Mammary epithelial cell (primary cell): ENCODE measurements at regions of chr14 and their contacts with region 1.

Region 1: DNA sequence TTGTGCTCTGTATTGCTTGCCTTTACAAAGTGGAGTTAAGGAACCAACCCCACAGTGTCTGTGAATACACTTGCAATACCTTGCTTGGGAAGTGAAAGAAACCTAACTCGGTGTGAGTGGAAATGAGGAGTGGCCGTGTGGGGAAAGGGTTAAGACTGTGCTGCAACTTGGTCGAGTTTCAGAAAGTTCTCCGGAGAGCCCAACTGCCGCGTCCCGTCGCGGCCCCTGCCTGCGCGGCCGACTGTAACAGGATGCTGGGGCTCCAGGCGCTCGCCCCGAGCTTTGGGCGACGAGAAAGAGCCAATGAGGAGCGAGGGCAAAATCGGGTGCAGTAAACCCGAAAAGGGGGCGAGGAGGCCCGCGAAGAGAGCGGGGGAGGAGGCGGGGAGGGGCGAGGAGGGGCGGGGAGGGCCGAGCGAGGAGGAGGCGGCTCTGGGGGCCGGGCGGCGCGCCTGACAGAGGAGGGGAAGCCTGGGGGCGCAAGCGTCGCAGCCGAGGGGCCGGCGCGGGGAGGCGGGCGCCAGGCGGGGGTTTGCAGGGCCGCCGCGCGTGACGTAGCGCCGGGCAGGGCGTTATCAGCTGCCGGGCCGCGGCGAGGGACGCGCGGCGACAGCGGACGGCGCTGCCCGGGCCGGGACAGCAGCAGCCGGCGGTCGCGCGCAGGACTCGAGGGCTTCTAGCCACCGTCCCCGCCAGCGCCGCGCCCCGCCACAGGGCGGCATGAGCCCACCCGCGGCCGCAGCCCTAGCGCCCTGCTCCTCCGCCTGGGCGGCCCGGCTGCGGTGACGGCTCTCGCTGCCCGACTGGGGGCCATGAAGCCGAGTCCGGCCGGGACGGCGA is at the start of gene DACT1:
- DNase-seq: no peak
- H3K4me3 ChIP-seq: peak within 1 kb of the TSS; percentile 47 to 62 (median 49)
- H3K27ac ChIP-seq: no peak within 1 kb of the TSS
- H3K4me1 ChIP-seq: peaks cover 14% of the 10 kb centered on the region
- H3K27me3 ChIP-seq: peaks cover 6% of the 10 kb centered on the region
- CTCF ChIP-seq: no peak
- total RNA-seq, gene DACT1: 0.28 to 3.3 TPM

Region 2: GRCh38 chr14:58501214-58501816 is 136.3 kb before region 1 on chr14:
- CTCF ChIA-PET with region 1: no interaction called
- dilution Hi-C with region 1: no loop called
- in situ Hi-C with region 1: no loop called
- intact Hi-C with region 1: loop called (anchors 1 kb)
- DNase-seq: peak; percentile 38
- H3K4me3 ChIP-seq: no peak overlapping the region
- H3K27ac ChIP-seq: no peak overlapping the region
- H3K4me1 ChIP-seq: no peaks in the 10 kb centered on the region
- H3K27me3 ChIP-seq: no peaks in the 10 kb centered on the region
- CTCF ChIP-seq: peak; percentile 84 to 86

Region 3: DNA sequence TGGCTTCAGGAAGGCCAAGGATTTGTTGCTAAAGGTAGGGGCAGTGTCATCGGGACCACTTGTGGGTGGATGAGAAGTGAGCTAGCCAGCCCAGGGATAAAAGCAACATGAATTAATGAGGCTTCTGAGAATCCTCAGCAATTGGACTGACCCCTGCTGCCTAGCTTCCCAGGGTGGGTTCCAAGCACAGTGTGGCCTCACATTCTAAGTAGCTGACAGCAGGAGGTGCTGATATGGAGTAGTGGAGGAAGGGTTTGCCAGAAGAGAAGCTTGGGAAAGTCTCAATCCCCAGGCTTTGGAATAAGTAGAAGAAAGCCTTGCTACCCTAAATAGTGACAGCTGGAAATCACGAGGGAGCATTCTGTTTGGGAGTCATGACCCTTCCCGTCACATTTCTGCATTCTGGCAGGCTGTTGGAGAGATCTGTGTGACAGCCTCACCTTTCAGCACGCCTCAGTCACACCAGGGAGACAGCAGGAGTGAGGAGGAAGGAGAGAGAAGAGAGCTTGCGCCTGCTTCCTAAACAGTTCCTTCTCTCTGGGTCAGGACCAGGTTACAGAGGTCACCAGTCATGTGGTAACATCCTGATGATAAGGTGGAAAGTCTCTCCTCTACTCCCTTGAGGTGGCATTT is 31.4 kb after region 1 on chr14:
- CTCF ChIA-PET with region 1: no interaction called
- dilution Hi-C with region 1: no loop called
- in situ Hi-C with region 1: no loop called
- intact Hi-C with region 1: no loop called
- DNase-seq: no peak
- H3K4me3 ChIP-seq: no peak overlapping the region
- H3K27ac ChIP-seq: no peak overlapping the region
- H3K4me1 ChIP-seq: peaks cover 3% of the 10 kb centered on the region
- H3K27me3 ChIP-seq: no peaks in the 10 kb centered on the region
- CTCF ChIP-seq: no peak

Region 4: GRCh38 chr14:58826845-58827686 is 189.5 kb after region 1 on chr14:
- CTCF ChIA-PET with region 1: no interaction called
- dilution Hi-C with region 1: no loop called
- in situ Hi-C with region 1: no loop called
- intact Hi-C with region 1: loop called (anchors 1 kb)
- DNase-seq: no peak
- H3K4me3 ChIP-seq: no peak overlapping the region
- H3K27ac ChIP-seq: no peak overlapping the region
- H3K4me1 ChIP-seq: peaks cover 6% of the 10 kb centered on the region
- H3K27me3 ChIP-seq: no peaks in the 10 kb centered on the region
- CTCF ChIP-seq: peak; percentile 16 to 44

Region 5: DNA sequence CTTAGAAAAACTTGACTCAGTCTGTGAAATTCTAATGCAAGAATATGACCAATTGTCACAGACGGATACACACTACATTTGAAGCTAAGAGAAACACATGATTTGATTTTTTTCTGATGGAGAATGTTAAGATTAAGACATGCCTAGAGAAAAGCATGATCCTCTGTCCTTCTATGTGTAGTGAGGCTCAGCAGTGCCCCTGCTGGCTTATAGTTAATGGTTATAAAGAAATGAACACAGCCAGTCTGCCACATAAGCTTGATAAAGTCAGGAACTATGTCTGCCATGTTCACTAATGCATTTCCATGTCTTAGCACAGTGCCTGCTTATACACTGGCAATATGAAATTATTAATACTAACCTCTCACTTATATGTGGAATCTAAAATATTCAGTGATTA is 382.8 kb after region 1 on chr14:
- CTCF ChIA-PET with region 1: interaction called, 3 read pairs
- dilution Hi-C with region 1: no loop called
- in situ Hi-C with region 1: loop called (anchors 10 to 25 kb)
- intact Hi-C with region 1: loop called (anchors 1 kb)
- DNase-seq: peak; percentile 20
- H3K4me3 ChIP-seq: no peak overlapping the region
- H3K27ac ChIP-seq: no peak overlapping the region
- H3K4me1 ChIP-seq: no peaks in the 10 kb centered on the region
- H3K27me3 ChIP-seq: no peaks in the 10 kb centered on the region
- CTCF ChIP-seq: peak; percentile 58 to 60

Region 6: DNA sequence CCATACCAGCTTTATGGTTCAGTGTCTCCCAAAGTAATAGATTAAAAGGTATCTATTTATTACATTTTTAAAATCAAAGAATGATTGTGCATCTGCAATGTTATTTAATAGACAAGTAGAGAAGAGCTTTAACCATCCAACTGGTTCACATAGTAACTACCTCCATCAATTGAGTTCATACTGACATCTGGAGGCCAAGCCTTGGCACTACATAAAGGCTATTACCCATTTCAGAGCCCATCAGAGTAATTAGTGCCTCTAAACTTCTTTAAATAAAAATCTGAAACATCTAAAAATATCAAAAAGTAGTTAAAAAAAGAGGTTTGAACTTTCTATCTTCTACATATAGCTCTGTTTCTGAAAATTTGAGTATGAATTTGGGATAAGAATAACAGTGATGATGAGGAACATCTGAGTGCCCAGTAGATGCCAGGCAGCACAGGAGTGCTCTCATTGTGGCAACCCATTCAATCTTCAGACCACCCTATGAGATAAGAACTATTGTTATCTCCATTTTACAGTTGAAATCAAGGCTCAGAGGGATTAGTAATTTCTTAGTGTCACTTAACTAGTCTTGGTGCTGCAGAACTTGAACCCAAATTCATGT is 417.9 kb after region 1 on chr14:
- CTCF ChIA-PET with region 1: interaction called, 3 read pairs
- dilution Hi-C with region 1: no loop called
- in situ Hi-C with region 1: no loop called
- intact Hi-C with region 1: loop called (anchors 1 kb)
- DNase-seq: peak; percentile 31
- H3K4me3 ChIP-seq: no peak overlapping the region
- H3K27ac ChIP-seq: no peak overlapping the region
- H3K4me1 ChIP-seq: no peaks in the 10 kb centered on the region
- H3K27me3 ChIP-seq: no peaks in the 10 kb centered on the region
- CTCF ChIP-seq: peak; percentile 70 to 84

Region 7: DNA sequence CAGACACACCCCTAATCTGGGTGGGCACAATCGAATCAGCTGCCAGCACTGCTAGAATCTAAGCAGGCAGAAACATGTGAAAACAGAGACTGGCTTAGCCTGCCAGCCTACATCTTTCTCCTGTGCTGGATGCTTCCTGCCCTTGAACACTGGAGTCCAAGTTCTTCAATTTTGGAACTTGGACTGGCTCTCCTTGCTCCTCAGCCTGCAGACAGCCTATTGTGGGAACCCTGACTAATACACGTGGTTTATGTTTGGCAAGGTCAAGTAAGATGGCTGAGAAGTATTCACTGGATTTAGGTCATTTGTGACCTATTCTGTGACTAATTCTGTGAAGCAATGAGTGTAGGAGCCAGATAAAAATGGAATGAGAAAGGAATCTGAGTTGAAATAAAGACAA is 816.5 kb after region 1 on chr14:
- CTCF ChIA-PET with region 1: no interaction called
- dilution Hi-C with region 1: no loop called
- in situ Hi-C with region 1: loop called in 1 of 2 experiments (anchors 25 kb)
- intact Hi-C with region 1: loop called (anchors 10 kb)
- DNase-seq: peak; percentile 85
- H3K4me3 ChIP-seq: no peak overlapping the region
- H3K27ac ChIP-seq: no peak overlapping the region
- H3K4me1 ChIP-seq: peaks cover 9% of the 10 kb centered on the region
- H3K27me3 ChIP-seq: no peaks in the 10 kb centered on the region
- CTCF ChIP-seq: no peak